B cell (primary cell): ENCODE measurements at regions of chr3 and their contacts with region 1.

Region 1: GRCh38 chr3:126134219-126134975 is 46.0 kb downstream of the ALDH1L1 start:
- DNase-seq: peak; percentile 52
- ATAC-seq: peak; percentile 51
- H3K4me3 ChIP-seq: no peak overlapping the region
- H3K4me3 Mint-ChIP-seq: no peak overlapping the region
- H3K27ac ChIP-seq: no peak overlapping the region
- H3K27ac Mint-ChIP-seq: no peak overlapping the region
- H3K4me1 ChIP-seq: no peaks in the 10 kb centered on the region
- H3K4me1 Mint-ChIP-seq: no peaks in the 10 kb centered on the region
- H3K27me3 ChIP-seq: peaks cover 0 to 10% (median 1%) of the 10 kb centered on the region in 4 experiments
- H3K27me3 Mint-ChIP-seq: peaks cover 38% of the 10 kb centered on the region
- CTCF ChIP-seq: peak; percentile 73

Region 2: DNA sequence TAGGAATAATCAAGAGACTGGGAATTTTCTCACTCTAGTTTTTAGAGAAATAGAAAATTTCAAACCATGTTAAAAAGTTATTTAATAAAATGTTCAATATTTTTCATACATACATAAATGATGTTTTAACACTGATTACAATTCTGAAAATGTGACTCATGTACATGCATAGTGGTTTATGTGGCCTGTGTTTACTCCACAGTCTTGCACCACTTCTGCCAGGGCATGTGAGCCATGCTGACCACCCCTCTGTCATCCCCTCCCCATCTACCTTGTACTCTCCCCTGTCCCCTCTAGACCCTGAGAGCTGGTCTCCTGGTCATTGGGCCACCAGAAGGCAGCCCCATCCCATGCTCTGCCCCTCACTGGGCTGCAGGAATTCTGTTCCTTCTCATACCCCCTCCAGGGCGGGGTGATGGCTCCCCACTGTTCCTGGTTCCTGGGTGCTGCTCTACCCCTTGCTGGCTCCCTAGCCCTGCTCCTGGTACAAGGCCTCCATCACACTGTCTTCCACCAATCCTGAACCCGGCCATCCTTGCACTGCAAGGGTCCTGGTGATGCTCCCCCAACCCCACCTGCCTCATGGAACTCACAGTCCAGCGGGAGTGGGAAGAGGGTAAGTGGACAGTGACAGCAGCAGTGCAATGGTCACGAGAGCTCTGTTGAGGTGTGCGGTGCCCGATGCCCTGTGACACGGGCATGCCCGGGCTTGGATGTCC is 26.3 kb before region 1 on chr3:
- CTCF ChIA-PET with region 1: no interaction called
- POLR2A ChIA-PET with region 1: no interaction called
- intact Hi-C with region 1: no loop called
- DNase-seq: no peak
- ATAC-seq: no peak
- H3K4me3 ChIP-seq: no peak overlapping the region
- H3K4me3 Mint-ChIP-seq: no peak overlapping the region
- H3K27ac ChIP-seq: no peak overlapping the region
- H3K27ac Mint-ChIP-seq: no peak overlapping the region
- H3K4me1 ChIP-seq: no peaks in the 10 kb centered on the region
- H3K4me1 Mint-ChIP-seq: no peaks in the 10 kb centered on the region
- H3K27me3 ChIP-seq: no peaks in the 10 kb centered on the region
- H3K27me3 Mint-ChIP-seq: no peaks in the 10 kb centered on the region
- CTCF ChIP-seq: no peak

Region 3: GRCh38 chr3:126149960-126150515 is 15.6 kb after region 1 on chr3:
- CTCF ChIA-PET with region 1: interaction called, 11 read pairs
- POLR2A ChIA-PET with region 1: no interaction called
- intact Hi-C with region 1: no loop called
- DNase-seq: no peak
- ATAC-seq: no peak
- H3K4me3 ChIP-seq: no peak overlapping the region
- H3K4me3 Mint-ChIP-seq: no peak overlapping the region
- H3K27ac ChIP-seq: no peak overlapping the region
- H3K27ac Mint-ChIP-seq: no peak overlapping the region
- H3K4me1 ChIP-seq: no peaks in the 10 kb centered on the region
- H3K4me1 Mint-ChIP-seq: no peaks in the 10 kb centered on the region
- H3K27me3 ChIP-seq: no peaks in the 10 kb centered on the region
- H3K27me3 Mint-ChIP-seq: peaks cover 3% of the 10 kb centered on the region
- CTCF ChIP-seq: no peak

Region 4: DNA sequence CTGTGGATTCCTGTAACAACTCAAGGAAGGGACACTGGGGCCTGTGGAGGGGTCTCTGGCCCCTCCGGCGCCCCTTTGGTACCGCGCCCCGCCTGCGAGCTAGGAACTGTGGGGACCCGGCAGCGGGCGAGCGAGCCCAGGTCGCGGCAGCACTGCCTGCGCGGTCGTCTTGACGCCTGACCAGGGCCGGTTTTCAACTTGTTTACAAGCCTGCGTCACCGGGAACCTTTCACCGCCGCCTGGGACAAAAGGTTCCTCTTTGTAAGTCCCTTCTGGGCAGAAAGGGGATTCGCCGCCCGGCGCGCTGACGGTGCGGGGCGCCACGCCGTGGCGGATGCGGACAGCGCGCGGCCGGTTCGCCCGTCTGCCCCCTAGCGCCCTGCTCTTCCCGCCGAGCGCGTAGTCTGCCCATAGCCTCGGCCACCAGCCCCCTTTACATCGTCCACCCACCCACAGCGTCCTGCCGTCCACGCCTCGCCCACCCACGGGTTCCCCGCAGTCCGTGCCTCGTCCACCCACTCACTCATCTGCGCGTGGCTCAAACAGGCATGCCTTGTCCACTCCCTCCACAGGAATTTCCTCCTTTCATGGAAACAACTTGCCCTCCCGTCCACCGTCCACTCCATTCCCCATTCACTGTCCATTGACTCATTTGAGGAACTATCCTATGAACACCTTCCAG is 254.9 kb after region 1 on chr3:
- CTCF ChIA-PET with region 1: interaction called, 16 read pairs
- POLR2A ChIA-PET with region 1: no interaction called
- intact Hi-C with region 1: no loop called
- DNase-seq: peak; percentile 78
- ATAC-seq: peak; percentile 90
- H3K4me3 ChIP-seq: peak overlapping the region in 4 of 5 experiments; percentile 11 to 33 (median 26)
- H3K4me3 Mint-ChIP-seq: peak overlapping the region; percentile 80
- H3K27ac ChIP-seq: no peak overlapping the region
- H3K27ac Mint-ChIP-seq: no peak overlapping the region
- H3K4me1 ChIP-seq: peaks cover 8 to 17% of the 10 kb centered on the region in 2 donors
- H3K4me1 Mint-ChIP-seq: peaks cover 23% of the 10 kb centered on the region
- H3K27me3 ChIP-seq: peaks cover 0 to 26% (median 7%) of the 10 kb centered on the region in 4 experiments
- H3K27me3 Mint-ChIP-seq: peaks cover 59% of the 10 kb centered on the region
- CTCF ChIP-seq: peak; percentile 64